ENCODE measurements at regions of chr1 and their contacts with region 1.

Region 1: GRCh38 chr1:23809751-23810171 is 9.2 kb upstream of the GALE start:
- DNase-seq: peak; percentile 86 to 91 (median 88)
- ATAC-seq: peak; percentile 92
- H3K4me3 ChIP-seq: no peak overlapping the region
- H3K4me1 ChIP-seq: peaks cover 13% of the 10 kb centered on the region
- CTCF ChIP-seq: peak; percentile 82

Region 2: GRCh38 chr1:23867953-23868556 is 58.3 kb after region 1 on chr1 and contains the start of gene FUCA1:
- intact Hi-C with region 1: loop called (anchors 5 to 10 kb)
- DNase-seq: peak; percentile 96 to 97 (median 97)
- ATAC-seq: peak; percentile 99
- H3K4me3 ChIP-seq: peak within 1 kb of the TSS; percentile 85
- H3K4me1 ChIP-seq: peaks cover 17% of the 10 kb centered on the region
- CTCF ChIP-seq: peak; percentile 91
- total RNA-seq, gene FUCA1: 82.2 to 171 (median 159) TPM

Measured in mucosa of descending colon (tissue), 3 donors.